Dendritic cell treated with granulocyte-macrophage colony-stimulating factor and Interleukin-4, amounts not matched to agents 40 ng/mL and 50 ng/mL, for 4 days (primary cell): ENCODE measurements at regions of chr1 and their contacts with region 1.

Region 1: DNA sequence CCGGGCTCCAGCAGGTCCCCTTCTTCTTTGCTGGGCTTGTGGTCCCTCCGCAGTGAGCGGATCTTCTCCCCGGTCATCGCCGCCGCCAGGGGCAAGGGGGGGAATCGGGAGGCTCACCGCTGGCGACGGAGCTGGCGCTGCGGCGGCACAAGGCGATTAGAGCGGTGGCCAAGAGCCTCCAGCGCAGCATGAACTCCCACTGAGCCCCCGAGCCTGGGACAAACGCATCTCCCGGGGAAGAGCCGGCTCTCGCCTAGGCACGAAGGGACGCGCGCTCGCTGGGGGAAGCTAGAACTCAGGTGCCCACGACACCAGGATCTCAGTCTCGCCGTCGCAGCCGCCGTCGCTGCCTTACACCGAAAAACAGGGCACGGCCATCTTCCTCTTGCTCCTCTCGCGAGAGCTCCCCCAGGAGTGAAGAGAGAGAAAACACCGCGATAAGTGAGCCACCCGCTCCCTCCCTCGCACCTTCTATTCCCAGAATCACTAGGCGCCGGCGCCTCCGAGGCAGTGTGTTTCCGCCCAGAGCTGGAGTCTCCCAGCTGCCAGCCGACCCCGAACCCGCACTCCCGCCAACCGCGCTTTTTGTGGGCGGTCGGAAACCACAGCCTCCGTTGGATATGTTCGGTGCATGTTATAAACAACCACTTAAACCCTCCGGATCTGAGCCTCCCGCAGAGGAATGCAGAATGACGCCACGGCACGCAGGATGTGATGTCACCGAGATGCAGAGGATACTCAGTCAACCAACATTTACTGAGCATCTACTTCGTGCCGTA is at the start of gene ANKRD13C:
- H3K4me3 Mint-ChIP-seq: peak within 1 kb of the TSS; percentile 96
- H3K27ac Mint-ChIP-seq: peak within 1 kb of the TSS; percentile 97
- H3K4me1 Mint-ChIP-seq: peaks cover 25% of the 10 kb centered on the region
- H3K27me3 Mint-ChIP-seq: no peaks in the 10 kb centered on the region

Region 2: DNA sequence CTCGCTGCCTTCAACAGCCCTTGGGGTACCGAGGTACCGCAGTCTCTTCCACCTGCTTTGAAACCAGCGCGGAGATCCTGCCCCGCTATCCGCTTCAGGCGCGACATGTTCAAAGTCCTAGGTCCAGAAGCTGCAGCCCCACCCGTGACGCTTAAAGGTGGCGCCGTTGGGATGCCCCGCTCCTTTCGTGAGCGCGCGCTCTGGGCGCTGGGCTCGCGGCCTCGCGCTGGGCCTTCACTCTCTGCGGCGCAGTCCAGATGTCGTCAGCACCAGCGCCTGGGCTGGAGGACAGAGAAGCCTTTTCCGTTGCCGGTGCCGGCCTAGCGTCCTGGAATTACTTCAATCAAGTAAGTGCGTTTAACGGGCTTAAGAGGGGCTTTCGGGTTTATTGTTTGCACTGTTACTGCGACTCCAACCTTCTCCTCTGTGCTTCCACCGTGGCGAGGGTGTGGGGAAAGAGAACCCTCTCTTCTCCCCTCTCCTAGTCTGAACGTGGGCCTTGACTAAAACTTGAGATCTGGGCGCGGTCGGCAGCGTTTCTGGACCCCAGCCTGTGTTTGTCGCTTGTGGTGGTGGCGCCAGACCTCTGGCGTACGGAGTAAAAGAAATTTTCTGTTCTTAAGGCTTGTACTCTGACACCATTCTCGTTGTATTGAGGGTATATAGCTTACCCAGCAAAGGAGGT is 148.9 kb before region 1 on chr1 and contains the start of gene LRRC40:
- intact Hi-C with region 1: loop called (anchors 2 kb)
- H3K4me3 Mint-ChIP-seq: peak within 1 kb of the TSS; percentile 91
- H3K27ac Mint-ChIP-seq: peak within 1 kb of the TSS; percentile 94
- H3K4me1 Mint-ChIP-seq: peaks cover 48% of the 10 kb centered on the region
- H3K27me3 Mint-ChIP-seq: no peaks in the 10 kb centered on the region

Region 3: GRCh38 chr1:70221241-70222121 is 133.0 kb before region 1 on chr1 and contains the start of gene SRSF11:
- intact Hi-C with region 1: loop called (anchors 5 kb)
- H3K4me3 Mint-ChIP-seq: peak within 1 kb of the TSS; percentile 86
- H3K27ac Mint-ChIP-seq: peak within 1 kb of the TSS; percentile 94
- H3K4me1 Mint-ChIP-seq: peaks cover 20% of the 10 kb centered on the region
- H3K27me3 Mint-ChIP-seq: no peaks in the 10 kb centered on the region

Region 4: GRCh38 chr1:70410604-70411359 is 56.3 kb after region 1 on chr1 and contains the start of gene CTH:
- intact Hi-C with region 1: loop called (anchors 2 kb)
- H3K4me3 Mint-ChIP-seq: peak within 1 kb of the TSS; percentile 93
- H3K27ac Mint-ChIP-seq: peak within 1 kb of the TSS; percentile 73
- H3K4me1 Mint-ChIP-seq: no peaks in the 10 kb centered on the region
- H3K27me3 Mint-ChIP-seq: peaks cover 8% of the 10 kb centered on the region